ENCODE measurements at regions of chr5 and their contacts with region 1.

Region 1: GRCh38 chr5:54234304-54234933 is 76.0 kb downstream of the ARL15 start:
- DNase-seq: no peak
- H3K4me3 ChIP-seq: no peak overlapping the region
- H3K27ac ChIP-seq: no peak overlapping the region
- H3K4me1 ChIP-seq: no peaks in the 10 kb centered on the region
- H3K27me3 ChIP-seq: no peaks in the 10 kb centered on the region
- CTCF ChIP-seq: peak in 2 of 3 donors; percentile 10 to 13
- EP300 ChIP-seq: no peak
- POLR2A ChIP-seq: no peak

Region 2: GRCh38 chr5:54360089-54360488 is 125.7 kb after region 1 on chr5:
- intact Hi-C with region 1: no loop called
- DNase-seq: no peak
- H3K4me3 ChIP-seq: no peak overlapping the region
- H3K27ac ChIP-seq: no peak overlapping the region
- H3K4me1 ChIP-seq: peaks cover 2% of the 10 kb centered on the region
- H3K27me3 ChIP-seq: no peaks in the 10 kb centered on the region
- CTCF ChIP-seq: no peak
- EP300 ChIP-seq: no peak
- POLR2A ChIP-seq: no peak

Region 3: DNA sequence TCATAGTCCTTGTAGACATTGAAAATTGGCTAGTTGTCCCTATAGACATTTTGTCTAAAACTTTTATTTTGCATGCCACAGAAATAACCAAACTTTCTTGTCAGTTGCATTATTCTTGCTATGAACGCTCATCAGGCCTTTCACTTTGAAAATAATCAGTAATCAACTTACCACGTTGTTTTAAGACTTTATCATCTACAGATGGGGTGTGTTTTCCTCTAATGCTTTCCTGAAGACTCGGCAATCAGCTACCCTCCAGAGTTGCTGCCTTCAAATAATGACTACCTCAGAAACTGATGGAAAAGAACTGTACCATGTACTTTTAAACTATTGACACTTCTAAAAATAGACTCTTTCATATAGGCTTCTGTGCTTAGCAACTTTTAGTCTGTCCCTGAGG is 187.6 kb after region 1 on chr5:
- intact Hi-C with region 1: loop called in 1 of 4 experiments (anchors 10 kb)
- DNase-seq: no peak
- H3K4me3 ChIP-seq: no peak overlapping the region
- H3K27ac ChIP-seq: no peak overlapping the region
- H3K4me1 ChIP-seq: no peaks in the 10 kb centered on the region
- H3K27me3 ChIP-seq: no peaks in the 10 kb centered on the region
- CTCF ChIP-seq: no peak
- EP300 ChIP-seq: no peak
- POLR2A ChIP-seq: no peak